CD4-positive, alpha-beta memory T cell (primary cell): ENCODE measurements at regions of chr6 and their contacts with region 1.

Region 1: DNA sequence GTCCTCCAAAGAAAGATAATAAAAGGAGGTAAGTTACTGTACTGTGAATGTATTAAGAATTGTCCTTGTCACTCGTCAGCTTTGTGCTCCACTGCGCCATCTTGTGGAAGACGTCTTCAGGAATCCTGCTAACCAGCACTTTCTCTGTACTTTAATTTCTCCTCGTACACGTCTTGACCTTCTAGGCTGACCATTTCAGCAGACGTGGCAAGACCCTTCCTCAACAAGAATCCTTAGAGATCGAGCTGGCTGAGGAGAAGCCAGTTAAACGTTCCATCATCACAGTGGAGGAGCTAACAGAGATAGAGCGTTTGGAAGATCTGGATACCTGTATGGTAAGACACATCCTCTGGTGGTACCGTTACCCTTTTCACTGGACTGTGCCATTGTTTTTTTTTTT is 95.5 kb upstream of the SCGN start:
- DNase-seq: peak; percentile 52 to 61 (median 56)
- H3K4me3 ChIP-seq: no peak overlapping the region
- H3K4me3 Mint-ChIP-seq: no peak overlapping the region
- H3K27ac ChIP-seq: no peak overlapping the region
- H3K27ac Mint-ChIP-seq: no peak overlapping the region
- H3K4me1 ChIP-seq: no peaks in the 10 kb centered on the region
- H3K4me1 Mint-ChIP-seq: peaks cover 0 to 3% (median 3%) of the 10 kb centered on the region in 4 donors
- H3K27me3 ChIP-seq: no peaks in the 10 kb centered on the region
- H3K27me3 Mint-ChIP-seq: no peaks in the 10 kb centered on the region

Region 2: DNA sequence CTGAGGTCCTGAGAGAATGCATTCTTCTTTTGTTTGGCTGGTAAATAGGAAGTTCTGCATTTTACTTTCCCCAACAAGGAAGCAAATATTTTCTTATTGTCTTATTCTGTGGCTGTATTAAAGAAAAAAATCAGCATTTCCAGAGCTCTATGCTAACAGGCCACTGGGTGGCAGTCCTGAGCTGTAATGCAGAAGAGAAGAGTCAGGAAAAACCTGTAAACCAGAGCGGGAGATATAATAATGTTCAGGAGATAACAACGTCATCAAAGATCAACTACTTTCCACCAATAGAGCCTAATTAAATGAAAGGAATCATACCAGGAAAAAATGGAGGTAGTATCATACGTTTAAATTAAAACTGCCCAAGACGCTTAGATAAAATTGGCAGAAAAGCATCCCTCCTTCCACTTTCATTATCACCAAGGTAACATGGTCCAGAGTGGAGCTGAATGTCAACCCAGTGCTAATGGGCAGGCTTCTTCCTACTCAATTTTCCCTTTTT is 333.0 kb before region 1 on chr6:
- CTCF ChIA-PET with region 1: interaction called, 13 read pairs
- POLR2A ChIA-PET with region 1: no interaction called
- intact Hi-C with region 1: loop called (anchors 1 kb)
- DNase-seq: peak; percentile 50 to 56 (median 54)
- H3K4me3 ChIP-seq: no peak overlapping the region
- H3K4me3 Mint-ChIP-seq: peak overlapping the region; percentile 40 to 74 (median 56)
- H3K27ac ChIP-seq: no peak overlapping the region
- H3K27ac Mint-ChIP-seq: peak overlapping the region in 2 of 7 donors; percentile 1 to 4
- H3K4me1 ChIP-seq: peaks cover 5% of the 10 kb centered on the region
- H3K4me1 Mint-ChIP-seq: peaks cover 2 to 9% (median 7%) of the 10 kb centered on the region in 4 donors
- H3K27me3 ChIP-seq: no peaks in the 10 kb centered on the region
- H3K27me3 Mint-ChIP-seq: peaks cover 3 to 6% of the 10 kb centered on the region in 2 donors

Region 3: GRCh38 chr6:25278914-25279747 is 277.4 kb before region 1 on chr6 and contains the start of gene CARMIL1:
- CTCF ChIA-PET with region 1: interaction called, 23 read pairs
- POLR2A ChIA-PET with region 1: no interaction called
- intact Hi-C with region 1: loop called (anchors 1 kb)
- DNase-seq: peak; percentile 57 to 73 (median 63)
- H3K4me3 ChIP-seq: peak within 1 kb of the TSS; percentile 53 to 66
- H3K4me3 Mint-ChIP-seq: peak within 1 kb of the TSS; percentile 82 to 98 (median 93)
- H3K27ac ChIP-seq: peak within 1 kb of the TSS; percentile 42
- H3K27ac Mint-ChIP-seq: peak within 1 kb of the TSS; percentile 81 to 96 (median 90)
- H3K4me1 ChIP-seq: peaks cover 20% of the 10 kb centered on the region
- H3K4me1 Mint-ChIP-seq: peaks cover 21 to 44% (median 28%) of the 10 kb centered on the region in 4 donors
- H3K27me3 ChIP-seq: no peaks in the 10 kb centered on the region
- H3K27me3 Mint-ChIP-seq: peaks cover 0 to 8% of the 10 kb centered on the region in 2 donors
- total RNA-seq, gene CARMIL1: 3.5 TPM

Region 4: DNA sequence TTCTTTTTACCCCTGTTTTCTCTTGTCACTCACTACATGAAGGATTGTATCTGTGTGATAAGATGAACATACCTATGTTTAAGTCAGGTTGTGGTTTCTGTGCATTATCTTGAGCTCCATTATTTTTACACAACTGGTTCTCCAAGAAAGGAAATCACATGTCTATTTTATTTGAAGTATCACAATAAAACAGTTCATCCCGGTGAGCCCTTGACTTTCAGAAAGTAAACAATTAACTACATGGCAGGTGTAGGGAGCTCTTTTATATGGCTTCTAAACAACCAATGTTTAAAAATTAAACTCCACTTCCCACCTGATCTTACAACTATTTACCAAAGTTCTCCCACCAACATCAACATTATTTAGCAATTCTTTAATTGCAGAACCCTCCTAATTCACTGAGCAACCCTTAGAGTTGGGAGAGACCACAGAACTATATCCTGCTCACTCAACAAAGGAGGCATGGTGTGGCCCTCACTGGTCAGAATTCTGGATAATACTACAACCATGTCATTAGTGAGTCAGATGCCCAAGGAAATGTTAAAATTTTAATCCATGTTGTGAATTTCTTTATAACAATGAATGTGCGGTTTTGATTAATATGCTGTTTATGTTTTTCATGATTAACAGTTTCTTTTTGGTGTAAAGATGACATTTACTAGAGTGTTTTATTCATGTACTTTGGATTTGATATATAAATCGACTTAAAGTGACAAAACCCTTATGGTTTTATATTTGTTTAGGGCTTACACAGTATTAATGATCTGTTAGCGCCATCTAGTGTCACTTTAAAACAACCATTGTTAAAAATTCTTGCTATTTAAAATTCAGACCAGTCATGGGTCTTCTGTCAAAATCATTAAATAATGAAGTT is 45.5 kb after region 1 on chr6:
- CTCF ChIA-PET with region 1: interaction called, 8 read pairs
- POLR2A ChIA-PET with region 1: no interaction called
- intact Hi-C with region 1: loop called (anchors 2 kb)
- DNase-seq: peak in 4 of 5 donors; percentile 35 to 46 (median 40)
- H3K4me3 ChIP-seq: no peak overlapping the region
- H3K4me3 Mint-ChIP-seq: no peak overlapping the region
- H3K27ac ChIP-seq: no peak overlapping the region
- H3K27ac Mint-ChIP-seq: no peak overlapping the region
- H3K4me1 ChIP-seq: no peaks in the 10 kb centered on the region
- H3K4me1 Mint-ChIP-seq: peaks cover 0 to 1% (median 0%) of the 10 kb centered on the region in 4 donors
- H3K27me3 ChIP-seq: no peaks in the 10 kb centered on the region
- H3K27me3 Mint-ChIP-seq: no peaks in the 10 kb centered on the region

Region 5: GRCh38 chr6:25804804-25805203 is 248.3 kb after region 1 on chr6:
- CTCF ChIA-PET with region 1: no interaction called
- POLR2A ChIA-PET with region 1: no interaction called
- intact Hi-C with region 1: no loop called
- DNase-seq: no peak
- H3K4me3 ChIP-seq: no peak overlapping the region
- H3K4me3 Mint-ChIP-seq: no peak overlapping the region
- H3K27ac ChIP-seq: no peak overlapping the region
- H3K27ac Mint-ChIP-seq: no peak overlapping the region
- H3K4me1 ChIP-seq: no peaks in the 10 kb centered on the region
- H3K4me1 Mint-ChIP-seq: no peaks in the 10 kb centered on the region
- H3K27me3 ChIP-seq: no peaks in the 10 kb centered on the region
- H3K27me3 Mint-ChIP-seq: peaks cover 7 to 17% of the 10 kb centered on the region in 2 donors

Region 6: GRCh38 chr6:25889877-25890853 is 333.6 kb after region 1 on chr6:
- CTCF ChIA-PET with region 1: no interaction called
- POLR2A ChIA-PET with region 1: no interaction called
- intact Hi-C with region 1: loop called (anchors 10 kb)
- DNase-seq: peak in 4 of 5 donors; percentile 34 to 42 (median 40)
- H3K4me3 ChIP-seq: no peak overlapping the region
- H3K4me3 Mint-ChIP-seq: no peak overlapping the region
- H3K27ac ChIP-seq: no peak overlapping the region
- H3K27ac Mint-ChIP-seq: peak overlapping the region in 1 of 7 donors; percentile 43
- H3K4me1 ChIP-seq: no peaks in the 10 kb centered on the region
- H3K4me1 Mint-ChIP-seq: no peaks in the 10 kb centered on the region
- H3K27me3 ChIP-seq: no peaks in the 10 kb centered on the region
- H3K27me3 Mint-ChIP-seq: peaks cover 0 to 2% of the 10 kb centered on the region in 2 donors

Region 7: DNA sequence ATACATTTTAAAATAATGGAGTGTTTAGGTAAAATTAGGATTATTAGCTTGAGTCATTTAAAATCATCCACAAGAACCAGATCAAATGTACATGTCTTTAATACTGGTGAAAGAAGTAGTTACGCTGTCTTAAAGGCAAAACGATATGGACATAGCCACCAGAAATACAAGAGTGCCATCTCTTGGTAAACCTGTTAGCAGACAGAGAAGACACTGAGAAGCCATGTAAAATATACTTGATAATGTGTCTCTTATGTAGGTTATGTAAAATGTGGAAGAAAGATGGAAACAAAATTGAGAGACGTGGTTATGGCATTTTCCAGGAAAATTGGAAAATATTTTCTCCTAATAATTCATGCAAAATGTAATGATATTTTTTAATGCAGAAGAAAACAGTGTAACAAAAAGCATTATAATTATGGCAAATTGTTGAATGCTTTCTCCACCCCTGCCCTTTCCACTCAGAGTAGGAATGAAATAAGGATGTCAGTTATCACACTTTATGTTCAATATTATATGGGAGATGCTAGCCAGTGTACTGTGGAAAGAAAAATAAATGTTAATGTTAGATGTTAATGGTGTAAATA is 386.1 kb after region 1 on chr6:
- CTCF ChIA-PET with region 1: no interaction called
- POLR2A ChIA-PET with region 1: no interaction called
- intact Hi-C with region 1: loop called (anchors 1 kb)
- DNase-seq: peak in 4 of 5 donors; percentile 27 to 40 (median 32)
- H3K4me3 ChIP-seq: no peak overlapping the region
- H3K4me3 Mint-ChIP-seq: no peak overlapping the region
- H3K27ac ChIP-seq: no peak overlapping the region
- H3K27ac Mint-ChIP-seq: no peak overlapping the region
- H3K4me1 ChIP-seq: peaks cover 9% of the 10 kb centered on the region
- H3K4me1 Mint-ChIP-seq: peaks cover 8 to 21% (median 15%) of the 10 kb centered on the region in 4 donors
- H3K27me3 ChIP-seq: no peaks in the 10 kb centered on the region
- H3K27me3 Mint-ChIP-seq: peaks cover 0 to 2% of the 10 kb centered on the region in 2 donors